HepG2 (cell line): ENCODE measurements at regions of chr3 and their contacts with region 1.

Region 1: GRCh38 chr3:139427283-139427993 is 38.0 kb upstream of the COPB2 start:
- DNase-seq: peak; percentile 74
- ATAC-seq: peak; percentile 88
- H3K4me3 ChIP-seq: no peak overlapping the region
- H3K27ac ChIP-seq: no peak overlapping the region
- H3K4me1 ChIP-seq: no peaks in the 10 kb centered on the region
- H3K27me3 ChIP-seq: no peaks in the 10 kb centered on the region
- CTCF ChIP-seq: peak; percentile 84
- EP300 ChIP-seq: no peak
- POLR2A ChIP-seq: no peak
- RAD21 ChIP-seq: peak; percentile 62; the same call in 1 of the 2 replicates

Region 2: DNA sequence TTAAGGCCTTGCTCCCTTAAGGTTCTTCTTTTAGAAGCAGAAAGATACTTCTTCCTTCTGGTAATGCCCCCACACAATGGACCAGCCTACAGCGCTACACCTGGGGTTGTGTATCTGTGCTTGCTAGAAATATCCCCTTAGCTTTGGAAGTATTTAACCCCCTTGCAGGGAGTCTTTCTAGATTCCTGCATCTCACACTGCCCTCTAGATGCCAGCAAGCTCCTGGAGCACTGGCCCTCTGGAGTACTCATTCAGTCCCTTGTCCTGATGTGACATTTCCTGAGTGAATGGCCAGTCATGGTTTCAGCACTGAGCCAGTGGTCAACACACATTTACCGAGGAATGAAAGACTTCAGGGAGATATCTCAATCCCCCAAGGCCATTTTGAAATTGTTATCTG is 79.3 kb after region 1 on chr3:
- CTCF ChIA-PET with region 1: no interaction called
- POLR2A ChIA-PET with region 1: no interaction called
- in situ Hi-C with region 1: no loop called
- intact Hi-C with region 1: loop called (anchors 5 kb)
- DNase-seq: peak; percentile 9
- ATAC-seq: peak; percentile 81
- H3K4me3 ChIP-seq: no peak overlapping the region
- H3K27ac ChIP-seq: no peak overlapping the region
- H3K4me1 ChIP-seq: peaks cover 24% of the 10 kb centered on the region
- H3K27me3 ChIP-seq: no peaks in the 10 kb centered on the region; a peak in 1 of 5 replicates
- CTCF ChIP-seq: peak; percentile 46
- EP300 ChIP-seq: no peak
- POLR2A ChIP-seq: no peak
- RAD21 ChIP-seq: no peak

Region 3: DNA sequence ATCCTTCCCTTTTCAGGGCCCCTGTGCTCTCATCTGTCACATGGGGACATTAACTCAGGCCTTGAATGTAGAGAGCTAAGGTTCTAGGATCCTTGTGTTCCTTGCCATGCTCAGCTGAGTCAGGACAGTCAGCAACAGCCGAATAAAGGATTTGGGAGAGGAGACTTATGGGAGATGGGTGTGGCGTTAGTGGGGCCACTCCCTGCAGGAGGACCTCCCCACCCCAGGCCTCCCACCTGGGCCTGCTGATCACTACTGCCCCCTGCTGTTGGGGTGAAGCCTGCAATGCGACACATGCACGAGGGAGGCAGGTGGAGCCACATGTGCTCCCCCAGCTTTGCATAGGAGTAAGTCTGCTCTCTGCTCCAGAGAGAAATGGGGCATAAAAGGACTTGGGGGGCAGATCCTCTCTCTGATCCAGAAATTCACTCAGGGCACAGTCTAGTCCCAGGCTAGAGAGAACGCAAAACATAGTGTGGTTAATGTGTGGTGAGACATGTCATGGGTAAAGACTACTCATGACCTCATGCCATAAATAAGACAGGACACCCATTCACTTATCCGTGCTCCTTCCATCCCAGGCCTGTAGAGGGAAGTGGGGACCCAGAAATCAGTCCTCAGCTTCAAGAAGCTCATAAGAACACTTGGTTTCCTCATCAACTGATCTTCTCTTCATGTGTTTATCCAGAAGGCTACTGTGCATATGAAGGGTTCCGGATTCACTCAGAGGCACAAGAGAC is 92.7 kb after region 1 on chr3:
- CTCF ChIA-PET with region 1: interaction called, 6 read pairs
- POLR2A ChIA-PET with region 1: no interaction called
- in situ Hi-C with region 1: no loop called
- intact Hi-C with region 1: loop called (anchors 1 kb)
- DNase-seq: no peak
- ATAC-seq: peak; percentile 90
- H3K4me3 ChIP-seq: no peak overlapping the region
- H3K27ac ChIP-seq: no peak overlapping the region
- H3K4me1 ChIP-seq: no peaks in the 10 kb centered on the region
- H3K27me3 ChIP-seq: no peaks in the 10 kb centered on the region
- CTCF ChIP-seq: peak; percentile 79
- EP300 ChIP-seq: no peak
- POLR2A ChIP-seq: no peak
- RAD21 ChIP-seq: no peak

Region 4: GRCh38 chr3:139561959-139562676 is 134.7 kb after region 1 on chr3:
- CTCF ChIA-PET with region 1: interaction called, 33 read pairs
- POLR2A ChIA-PET with region 1: no interaction called
- in situ Hi-C with region 1: loop called (anchors 5 kb)
- intact Hi-C with region 1: loop called (anchors 1 kb)
- DNase-seq: peak; percentile 47
- ATAC-seq: peak; percentile 86
- H3K4me3 ChIP-seq: no peak overlapping the region
- H3K27ac ChIP-seq: no peak overlapping the region
- H3K4me1 ChIP-seq: no peaks in the 10 kb centered on the region
- H3K27me3 ChIP-seq: no peaks in the 10 kb centered on the region
- CTCF ChIP-seq: peak; percentile 82
- EP300 ChIP-seq: no peak
- POLR2A ChIP-seq: no peak
- RAD21 ChIP-seq: peak; percentile 70

Region 5: DNA sequence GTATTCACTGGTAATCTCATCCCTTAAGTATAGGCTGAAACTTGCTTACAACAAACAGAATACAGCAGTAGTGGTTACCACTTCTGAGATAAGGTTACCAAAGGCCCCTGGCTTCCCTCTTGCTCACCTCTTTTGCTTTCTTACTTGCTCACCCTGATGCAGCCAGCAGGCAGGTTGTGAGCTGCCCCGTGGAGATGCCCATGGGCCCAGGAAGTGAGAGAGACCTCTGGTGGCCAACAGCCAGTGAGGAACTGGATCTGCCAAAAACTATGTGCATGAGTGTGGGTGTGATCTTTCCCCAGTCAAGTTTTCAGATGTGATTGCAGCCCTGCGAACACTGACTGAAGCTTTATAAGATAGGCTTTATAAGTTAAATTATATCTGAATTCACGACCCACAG is 201.6 kb after region 1 on chr3:
- CTCF ChIA-PET with region 1: interaction called, 3 read pairs
- POLR2A ChIA-PET with region 1: no interaction called
- in situ Hi-C with region 1: no loop called
- intact Hi-C with region 1: loop called (anchors 1 kb)
- DNase-seq: peak; percentile 36
- ATAC-seq: peak; percentile 98
- H3K4me3 ChIP-seq: no peak overlapping the region
- H3K27ac ChIP-seq: no peak overlapping the region
- H3K4me1 ChIP-seq: no peaks in the 10 kb centered on the region
- H3K27me3 ChIP-seq: no peaks in the 10 kb centered on the region
- CTCF ChIP-seq: peak; percentile 70
- EP300 ChIP-seq: no peak
- POLR2A ChIP-seq: no peak
- RAD21 ChIP-seq: no peak; the same call in 1 of the 2 replicates